ENCODE measurements at regions of chr11 and their contacts with region 1.

Region 1: GRCh38 chr11:123560006-123560405 is 94.4 kb downstream of the SCN3B start:
- DNase-seq: no peak
- H3K4me3 ChIP-seq: no peak overlapping the region
- H3K27ac ChIP-seq: no peak overlapping the region
- H3K4me1 ChIP-seq: no peaks in the 10 kb centered on the region
- H3K27me3 ChIP-seq: peaks cover 9% of the 10 kb centered on the region
- CTCF ChIP-seq: no peak

Region 2: DNA sequence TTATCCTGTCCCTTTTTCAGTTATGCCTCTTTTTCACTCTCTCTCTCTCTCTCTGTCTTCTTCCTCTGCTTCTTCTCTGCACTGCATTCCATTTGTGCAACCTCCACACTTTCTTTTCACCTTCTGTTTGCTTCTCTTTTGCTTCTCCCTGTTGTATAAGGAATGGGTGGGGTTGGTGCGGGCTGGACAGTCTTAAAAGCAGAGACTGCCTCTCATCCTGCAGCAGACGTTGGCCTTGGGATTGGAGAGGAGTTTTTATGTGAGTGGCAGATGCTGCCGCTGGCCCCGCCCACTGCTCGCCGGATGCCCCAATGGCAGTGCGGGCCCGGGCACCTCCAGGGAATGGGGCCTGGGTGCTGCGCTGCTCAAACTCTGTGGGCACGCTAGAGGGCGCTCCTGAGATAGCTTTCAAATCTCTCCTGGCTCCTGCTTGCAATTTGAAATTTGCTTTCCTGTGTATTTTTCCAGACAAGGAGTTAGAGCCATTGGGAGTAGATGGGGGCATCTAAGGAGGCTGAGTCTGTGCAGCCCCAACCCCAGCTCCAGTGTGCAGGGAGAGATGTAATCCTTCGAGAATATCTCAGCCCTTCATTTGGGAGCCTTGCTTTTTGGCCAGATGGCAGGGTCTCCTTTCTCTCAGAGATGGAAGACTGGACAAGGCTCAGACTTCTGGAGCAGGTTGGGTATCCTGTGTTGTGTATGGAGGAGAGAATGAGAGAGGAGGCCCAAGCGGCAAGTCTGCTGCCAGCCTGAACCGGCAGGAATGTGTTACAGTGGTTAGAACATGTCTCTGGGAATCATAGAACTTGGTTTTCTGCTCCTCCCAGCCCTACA is 48.8 kb before region 1 on chr11:
- CTCF ChIA-PET with region 1: no interaction called
- dilution Hi-C with region 1: no loop called
- in situ Hi-C with region 1: no loop called
- intact Hi-C with region 1: loop called (anchors 1 kb)
- DNase-seq: peak; percentile 82
- H3K4me3 ChIP-seq: no peak overlapping the region
- H3K27ac ChIP-seq: no peak overlapping the region
- H3K4me1 ChIP-seq: no peaks in the 10 kb centered on the region
- H3K27me3 ChIP-seq: no peaks in the 10 kb centered on the region
- CTCF ChIP-seq: peak; percentile 83 to 85

Region 3: DNA sequence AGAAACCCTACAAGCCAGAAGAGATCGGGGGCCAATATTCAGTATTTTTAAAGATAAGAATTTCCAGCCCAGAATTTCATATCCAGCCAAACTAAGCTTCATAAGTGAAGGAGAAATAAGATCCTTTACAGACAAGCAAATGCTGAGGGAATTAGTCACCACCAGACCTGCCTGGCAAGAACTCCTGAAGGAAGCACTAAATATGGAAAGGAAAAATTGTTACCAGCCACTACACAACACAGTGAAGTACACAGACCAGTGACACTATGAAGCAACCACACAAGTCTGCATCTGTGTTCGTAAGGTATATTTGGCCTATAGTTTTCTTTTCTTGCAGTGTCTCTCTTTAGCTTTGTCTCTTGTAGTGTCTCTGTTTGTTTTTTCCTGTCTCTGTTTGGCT is 296.4 kb after region 1 on chr11:
- CTCF ChIA-PET with region 1: no interaction called
- dilution Hi-C with region 1: no loop called
- in situ Hi-C with region 1: no loop called
- intact Hi-C with region 1: no loop called
- DNase-seq: peak; percentile 45
- H3K4me3 ChIP-seq: no peak overlapping the region
- H3K27ac ChIP-seq: no peak overlapping the region
- H3K4me1 ChIP-seq: peaks cover 4% of the 10 kb centered on the region
- H3K27me3 ChIP-seq: no peaks in the 10 kb centered on the region
- CTCF ChIP-seq: no peak

Measured in mammary epithelial cell (primary cell).